GM10248 (cell line): ENCODE measurements at regions of chr7 and their contacts with region 1.

Region 1: DNA sequence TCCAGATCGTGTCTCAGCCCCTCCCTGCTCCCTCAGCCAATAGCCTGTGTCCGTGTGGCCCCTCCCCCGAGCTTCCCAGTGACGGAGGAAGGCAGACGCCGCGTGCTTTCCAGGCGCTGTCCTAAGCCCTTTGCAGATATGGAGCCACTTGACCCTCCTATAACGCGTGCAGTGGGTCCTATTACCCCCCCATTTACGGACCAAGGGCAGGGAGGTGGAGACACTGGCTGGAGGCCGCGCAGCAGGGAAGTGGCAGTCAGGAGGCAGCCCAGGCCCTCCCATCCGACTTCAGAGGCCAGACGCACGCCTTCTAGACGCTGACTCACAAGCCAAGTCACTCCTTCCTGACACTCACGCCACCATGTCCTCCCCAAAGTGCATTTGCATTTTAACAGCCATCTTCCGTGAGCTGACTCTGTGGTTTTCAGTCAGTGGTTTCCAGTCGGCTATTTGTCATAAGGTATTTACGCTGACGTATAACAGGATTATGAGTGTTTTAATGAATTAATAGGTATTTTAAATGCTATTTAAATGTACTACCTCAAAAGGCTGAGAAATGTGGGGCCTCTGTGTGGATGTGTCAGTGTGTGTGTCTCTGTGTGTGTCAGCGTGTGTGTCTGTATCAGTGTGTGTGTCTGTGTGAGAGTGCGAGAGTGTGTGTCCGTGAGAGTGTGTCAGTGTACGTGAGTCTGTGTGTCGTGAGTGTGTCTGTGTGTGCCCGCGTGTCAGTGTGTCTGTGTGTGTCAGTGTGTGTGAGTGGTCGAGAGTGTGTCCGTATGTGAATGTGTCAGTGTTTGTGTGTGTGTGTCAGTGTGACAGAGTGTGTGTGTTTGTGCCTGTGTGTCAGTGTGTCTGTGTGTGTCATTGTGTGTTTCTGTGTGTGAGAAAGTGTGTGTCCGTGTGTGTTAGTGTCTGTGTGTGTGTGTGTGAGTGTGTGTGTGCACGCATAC is 92.0 kb upstream of the INSIG1 start:
- DNase-seq: peak; percentile 91
- CTCF ChIP-seq: no peak

Region 2: DNA sequence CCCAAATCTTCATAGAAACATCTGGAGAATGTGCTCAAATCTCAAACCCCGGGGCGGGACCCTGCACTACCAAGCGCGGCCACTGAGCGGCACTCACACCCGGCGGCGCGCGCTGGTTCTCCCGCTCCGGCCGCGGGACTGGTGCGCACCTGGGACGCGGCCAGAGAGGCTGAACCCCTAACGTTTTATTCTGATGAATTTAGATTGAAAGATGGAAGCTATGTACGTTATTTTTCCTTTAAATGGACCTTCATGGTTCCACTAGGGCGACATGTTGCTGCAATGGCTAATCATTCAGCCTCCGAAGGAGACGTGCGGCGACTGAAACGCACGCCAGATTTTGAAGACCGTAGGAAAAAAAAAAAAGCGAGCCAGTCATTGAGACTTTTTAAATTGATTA is 15.0 kb before region 1 on chr7:
- CTCF ChIA-PET with region 1: interaction called, 16 read pairs
- POLR2A ChIA-PET with region 1: interaction called, 9 read pairs
- DNase-seq: peak; percentile 84
- CTCF ChIP-seq: peak; percentile 92

Region 3: DNA sequence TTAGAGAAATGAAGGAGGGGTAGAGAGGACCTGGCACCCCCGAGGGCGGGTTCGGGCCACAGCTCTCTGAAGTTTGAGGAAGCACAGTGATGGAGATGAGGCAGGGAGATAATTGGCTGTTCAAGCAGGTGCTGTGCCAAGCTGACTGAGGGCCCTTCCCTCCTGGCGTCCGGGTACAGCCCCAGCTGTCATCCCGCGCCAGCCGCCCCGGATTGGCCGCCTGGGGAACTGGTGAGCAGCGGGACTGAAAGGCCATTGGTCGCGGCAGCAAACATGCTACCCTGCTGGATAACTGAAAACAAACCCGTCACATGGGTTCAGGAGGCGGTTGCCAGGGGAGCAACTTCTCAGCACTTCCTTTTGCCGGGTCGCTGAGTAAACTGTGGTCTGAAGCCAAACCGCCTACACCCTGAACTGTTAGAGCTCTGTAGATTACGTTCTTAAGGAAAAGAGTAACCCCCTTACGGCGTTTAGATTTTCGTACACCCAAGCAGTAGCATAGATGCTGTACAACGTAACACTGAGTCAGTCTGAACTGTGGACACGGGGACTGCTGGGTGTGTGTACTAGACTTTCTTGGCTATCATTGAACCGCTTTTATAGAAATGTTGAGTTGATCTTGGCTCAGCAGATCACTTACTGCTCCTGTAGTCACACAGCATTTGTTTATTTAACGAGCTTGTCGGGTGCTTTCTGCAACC is 93.3 kb after region 1 on chr7:
- CTCF ChIA-PET with region 1: interaction called, 4 read pairs
- POLR2A ChIA-PET with region 1: interaction called, 19 read pairs
- DNase-seq: peak; percentile 93
- CTCF ChIP-seq: no peak